Gastrocnemius medialis (tissue), 4 donors: ENCODE measurements at regions of chr1 and their contacts with region 1.

Region 1: DNA sequence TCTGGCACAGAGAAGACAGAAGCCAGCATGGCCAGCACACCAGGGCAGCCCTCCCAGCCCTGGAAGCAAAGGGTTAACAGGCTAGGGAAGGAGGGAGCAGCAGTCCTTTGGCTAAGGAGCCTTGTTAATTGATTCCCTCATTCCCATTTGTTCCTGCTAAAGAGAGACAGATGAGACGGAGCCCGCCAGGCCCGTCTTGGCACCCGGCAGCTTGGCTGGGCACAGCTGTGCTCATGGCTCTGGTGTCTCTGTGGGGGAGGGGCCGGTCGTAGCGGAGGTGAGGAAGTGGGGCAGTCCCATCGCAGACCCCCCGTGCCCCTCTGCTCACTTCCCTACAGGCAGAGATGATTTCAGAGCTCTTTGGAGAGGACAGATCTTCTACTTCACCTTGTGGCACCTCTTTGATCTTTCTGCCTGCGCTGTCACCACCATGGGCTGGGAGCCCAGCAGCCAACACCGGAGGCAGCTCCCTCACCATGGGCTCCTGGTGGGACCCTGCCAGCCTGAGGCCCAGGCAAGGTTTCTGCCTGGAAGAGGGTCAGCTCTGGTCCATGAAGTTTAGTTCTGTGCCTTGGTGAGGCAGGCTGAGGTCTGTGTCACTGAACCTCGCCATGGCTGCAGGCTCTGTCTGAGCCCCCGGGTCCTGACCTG is 38.0 kb downstream of the FOXO6 start:
- DNase-seq: peak; percentile 35 to 84
- ATAC-seq: peak; percentile 61 to 83
- H3K4me3 ChIP-seq: peak overlapping the region in 3 of 4 donors; percentile 14 to 31 (median 23)
- H3K27ac ChIP-seq: peak overlapping the region; percentile 36 to 81 (median 78)
- H3K4me1 ChIP-seq: peaks cover 34 to 41% of the 10 kb centered on the region in 2 donors
- H3K27me3 ChIP-seq: no peaks in the 10 kb centered on the region
- CTCF ChIP-seq: no peak
- POLR2A ChIP-seq: no peak

Region 2: DNA sequence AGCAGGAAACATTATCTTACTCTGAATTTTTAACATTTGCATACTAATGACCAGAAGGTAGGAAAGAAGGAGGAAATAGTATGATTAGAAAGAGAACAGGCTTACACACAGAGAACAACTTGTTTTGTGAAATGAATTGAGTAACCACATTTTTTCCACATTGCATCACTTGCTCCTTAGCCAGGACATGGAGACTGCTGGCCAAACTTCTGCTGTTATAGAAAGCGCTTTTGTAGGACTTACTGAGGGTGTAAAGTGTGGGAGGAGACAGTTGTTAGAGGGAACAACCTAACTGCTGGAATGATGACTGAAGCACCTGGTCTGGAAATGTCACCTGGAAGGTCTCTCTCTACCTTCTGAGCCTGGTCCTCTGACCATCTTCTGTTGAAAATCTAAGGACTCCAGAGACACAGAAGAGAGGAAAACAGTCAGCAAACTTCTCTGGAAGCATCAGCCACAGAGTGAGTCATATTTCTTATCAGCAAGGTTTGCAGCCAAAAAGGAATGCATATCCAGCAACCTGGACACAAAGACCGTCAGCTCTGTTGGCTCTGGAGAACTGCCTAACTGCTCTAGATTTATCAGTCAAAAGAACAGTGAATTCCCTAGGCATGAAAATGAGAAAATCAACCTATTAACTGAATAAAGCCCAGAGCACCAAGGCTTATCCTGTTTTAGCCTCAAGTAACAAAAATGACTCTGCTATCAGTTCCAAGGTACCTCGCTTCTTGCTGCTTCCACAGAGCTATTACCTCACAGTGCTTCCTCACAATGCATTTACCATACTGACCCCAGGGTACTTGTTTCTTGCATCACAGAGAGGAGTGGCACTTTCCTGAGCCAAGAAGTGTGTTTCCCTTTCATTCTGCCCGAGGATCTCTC is 289.7 kb before region 1 on chr1:
- in situ Hi-C with region 1: no loop called
- intact Hi-C with region 1: no loop called
- DNase-seq: peak; percentile 24 to 55
- ATAC-seq: peak; percentile 94 to 95
- H3K4me3 ChIP-seq: peak overlapping the region in 2 of 4 donors; percentile 4 to 9
- H3K27ac ChIP-seq: peak overlapping the region; percentile 76 to 87 (median 82)
- H3K4me1 ChIP-seq: peaks cover 26 to 30% of the 10 kb centered on the region in 2 donors
- H3K27me3 ChIP-seq: no peaks in the 10 kb centered on the region
- CTCF ChIP-seq: no peak
- POLR2A ChIP-seq: peak in 1 of 2 donors; percentile 9

Region 3: DNA sequence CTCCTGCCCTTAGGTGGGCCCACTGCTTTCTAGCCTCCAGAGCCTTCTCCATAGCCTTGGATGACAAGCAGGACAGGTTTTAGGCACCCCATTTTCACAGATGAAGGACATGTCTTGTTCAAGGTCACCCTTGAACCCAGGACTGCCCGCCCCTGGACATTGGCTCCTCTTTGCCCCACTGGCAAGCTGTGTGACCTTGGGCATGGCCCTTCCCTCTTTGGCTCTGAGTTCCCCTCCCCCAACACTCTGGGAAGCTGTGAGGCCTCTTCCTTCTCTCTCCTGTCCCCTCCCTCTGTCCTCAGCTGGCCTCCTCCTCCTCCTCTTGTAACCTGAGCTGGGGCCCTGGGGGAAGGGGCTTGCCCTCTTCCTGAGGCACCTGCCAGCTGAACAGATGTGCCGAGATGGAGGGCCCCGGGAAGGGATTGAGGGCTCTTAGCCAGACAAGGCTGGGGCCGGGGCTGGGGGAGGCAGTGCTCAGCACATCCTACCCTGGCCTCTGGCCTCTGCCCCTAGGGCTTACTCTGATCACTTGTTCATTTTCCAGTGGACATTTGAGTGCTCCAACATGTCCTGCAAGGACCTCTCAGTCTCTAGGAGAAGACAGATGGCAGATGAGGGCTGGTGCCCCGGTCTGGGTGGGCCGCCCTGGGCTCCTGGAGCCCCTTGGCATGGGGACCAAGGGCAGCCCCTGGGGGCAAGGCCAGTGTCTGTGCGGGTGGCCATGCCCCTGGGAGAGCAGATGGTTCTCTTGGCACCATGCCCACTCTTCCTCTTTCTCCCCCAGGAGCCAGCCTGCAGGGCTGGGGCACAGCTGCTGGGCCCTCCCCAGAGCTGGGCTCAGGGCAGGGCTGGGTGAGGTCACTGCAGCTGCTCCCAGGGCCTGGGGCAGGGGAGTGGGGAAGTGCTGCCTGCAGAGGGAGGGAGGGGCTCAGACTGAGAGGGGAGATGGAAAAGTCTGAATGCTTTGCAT is 27.4 kb before region 1 on chr1:
- in situ Hi-C with region 1: no loop called
- intact Hi-C with region 1: loop called (anchors 2 kb)
- DNase-seq: peak; percentile 23 to 71
- ATAC-seq: peak; percentile 50 to 83
- H3K4me3 ChIP-seq: no peak overlapping the region
- H3K27ac ChIP-seq: peak overlapping the region; percentile 42 to 77 (median 68)
- H3K4me1 ChIP-seq: peaks cover 22 to 26% of the 10 kb centered on the region in 2 donors
- H3K27me3 ChIP-seq: no peaks in the 10 kb centered on the region
- CTCF ChIP-seq: no peak
- POLR2A ChIP-seq: no peak

Region 4: GRCh38 chr1:41454406-41455122 is 55.3 kb after region 1 on chr1:
- in situ Hi-C with region 1: no loop called
- intact Hi-C with region 1: no loop called
- DNase-seq: no peak
- ATAC-seq: no peak
- H3K4me3 ChIP-seq: no peak overlapping the region
- H3K27ac ChIP-seq: no peak overlapping the region
- H3K4me1 ChIP-seq: peaks cover 7 to 12% of the 10 kb centered on the region in 2 donors
- H3K27me3 ChIP-seq: no peaks in the 10 kb centered on the region
- CTCF ChIP-seq: no peak
- POLR2A ChIP-seq: no peak